ENCODE measurements at regions of chr11 and their contacts with region 1.

Region 1: GRCh38 chr11:17730608-17731462 is 3.7 kb upstream of the KCNC1 start:
- DNase-seq: peak; percentile 66
- ATAC-seq: peak; percentile 77
- H3K4me3 ChIP-seq: no peak overlapping the region
- H3K27ac ChIP-seq: no peak overlapping the region
- H3K4me1 ChIP-seq: no peaks in the 10 kb centered on the region
- H3K27me3 ChIP-seq: peaks cover 32% of the 10 kb centered on the region
- CTCF ChIP-seq: peak; percentile 96
- POLR2A ChIP-seq: peak; percentile 46; the same call in 1 of the 2 replicates
- RAD21 ChIP-seq: peak; percentile 98

Region 2: GRCh38 chr11:17598700-17599459 is 132.0 kb before region 1 on chr11:
- CTCF ChIA-PET with region 1: interaction called, 8 read pairs
- POLR2A ChIA-PET with region 1: no interaction called
- dilution Hi-C with region 1: no loop called
- in situ Hi-C with region 1: loop called (anchors 5 kb)
- intact Hi-C with region 1: loop called (anchors 1 kb)
- DNase-seq: peak; percentile 55
- ATAC-seq: peak; percentile 98
- H3K4me3 ChIP-seq: no peak overlapping the region
- H3K27ac ChIP-seq: no peak overlapping the region
- H3K4me1 ChIP-seq: no peaks in the 10 kb centered on the region
- H3K27me3 ChIP-seq: peaks cover 7% of the 10 kb centered on the region
- CTCF ChIP-seq: peak; percentile 90
- POLR2A ChIP-seq: no peak
- RAD21 ChIP-seq: peak; percentile 90

Region 3: DNA sequence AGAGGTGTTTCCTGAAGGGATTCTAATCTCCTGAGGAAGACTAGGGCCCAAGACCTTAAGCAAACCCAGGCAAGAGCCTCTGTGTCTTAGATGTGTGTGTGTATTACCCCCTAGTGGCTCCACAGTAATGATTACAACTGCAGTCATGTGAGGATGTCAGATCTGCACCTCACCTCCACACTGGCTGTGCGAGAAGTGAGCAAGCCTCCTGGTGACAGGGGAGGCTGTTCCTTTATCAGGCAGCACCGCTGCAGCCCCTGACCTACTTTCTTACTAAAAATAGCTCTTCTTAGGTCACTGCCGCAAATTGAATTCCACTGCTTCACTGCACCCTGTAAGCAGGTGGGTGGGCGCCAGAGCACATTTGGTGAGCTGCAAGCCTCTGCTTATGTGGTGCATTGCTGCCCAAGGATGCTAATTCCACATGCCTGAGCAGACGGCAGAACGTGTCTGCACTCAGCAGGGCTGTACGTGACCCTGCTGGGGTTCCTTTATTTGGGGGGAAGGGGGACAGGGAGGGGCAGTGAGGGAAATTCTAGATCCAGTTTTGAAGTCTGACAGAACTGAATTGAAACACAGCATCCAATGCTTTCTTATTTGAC is 116.1 kb after region 1 on chr11:
- CTCF ChIA-PET with region 1: interaction called, 4 read pairs
- POLR2A ChIA-PET with region 1: no interaction called
- dilution Hi-C with region 1: no loop called
- in situ Hi-C with region 1: no loop called
- intact Hi-C with region 1: loop called (anchors 1 kb)
- DNase-seq: peak; percentile 73
- ATAC-seq: peak; percentile 71
- H3K4me3 ChIP-seq: no peak overlapping the region
- H3K27ac ChIP-seq: no peak overlapping the region
- H3K4me1 ChIP-seq: peaks cover 16% of the 10 kb centered on the region
- H3K27me3 ChIP-seq: no peaks in the 10 kb centered on the region
- CTCF ChIP-seq: peak; percentile 54
- POLR2A ChIP-seq: no peak
- RAD21 ChIP-seq: peak; percentile 64

Region 4: GRCh38 chr11:17978553-17979287 is 247.9 kb after region 1 on chr11:
- CTCF ChIA-PET with region 1: interaction called, 158 read pairs
- POLR2A ChIA-PET with region 1: no interaction called
- dilution Hi-C with region 1: loop called (anchors 25 kb)
- in situ Hi-C with region 1: loop called (anchors 5 kb)
- intact Hi-C with region 1: loop called (anchors 1 kb)
- DNase-seq: peak; percentile 53
- ATAC-seq: peak; percentile 96
- H3K4me3 ChIP-seq: no peak overlapping the region
- H3K27ac ChIP-seq: no peak overlapping the region
- H3K4me1 ChIP-seq: no peaks in the 10 kb centered on the region
- H3K27me3 ChIP-seq: no peaks in the 10 kb centered on the region
- CTCF ChIP-seq: peak; percentile 78
- POLR2A ChIP-seq: no peak
- RAD21 ChIP-seq: peak; percentile 80

Region 5: DNA sequence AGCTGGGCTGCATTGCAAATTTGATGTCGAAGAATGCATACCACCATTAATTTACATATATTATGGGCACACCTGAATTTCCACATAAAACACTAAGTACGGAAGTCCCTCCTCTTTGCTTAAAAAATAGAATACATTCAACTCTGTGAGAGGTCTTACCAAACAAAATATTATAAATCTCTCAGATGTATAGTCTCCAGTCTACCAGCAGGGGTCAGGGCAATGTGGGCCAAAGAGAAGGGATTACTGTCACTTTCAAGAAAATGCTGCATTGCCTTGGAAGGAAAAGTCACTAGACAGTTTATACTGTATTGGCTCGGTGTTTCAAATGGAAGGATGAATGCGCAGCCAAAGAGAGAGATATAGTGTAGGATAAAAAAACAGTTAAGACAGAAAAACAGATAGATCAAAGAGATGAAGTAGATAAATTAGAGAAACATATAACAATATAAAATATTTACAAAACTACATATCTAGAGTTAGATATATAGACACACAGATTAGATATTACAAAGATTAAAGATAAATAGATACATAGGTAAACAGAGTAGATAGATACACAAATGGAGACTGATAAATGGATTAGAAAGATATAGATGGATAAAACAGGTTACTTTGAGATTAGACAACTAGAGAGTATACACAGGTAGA is 261.1 kb after region 1 on chr11:
- CTCF ChIA-PET with region 1: interaction called, 15 read pairs
- POLR2A ChIA-PET with region 1: no interaction called
- dilution Hi-C with region 1: loop called (anchors 25 kb)
- in situ Hi-C with region 1: no loop called
- intact Hi-C with region 1: no loop called
- DNase-seq: peak; percentile 70
- ATAC-seq: peak; percentile 99
- H3K4me3 ChIP-seq: no peak overlapping the region
- H3K27ac ChIP-seq: no peak overlapping the region
- H3K4me1 ChIP-seq: no peaks in the 10 kb centered on the region
- H3K27me3 ChIP-seq: no peaks in the 10 kb centered on the region
- CTCF ChIP-seq: peak; percentile 77
- POLR2A ChIP-seq: no peak
- RAD21 ChIP-seq: peak; percentile 66

Region 6: DNA sequence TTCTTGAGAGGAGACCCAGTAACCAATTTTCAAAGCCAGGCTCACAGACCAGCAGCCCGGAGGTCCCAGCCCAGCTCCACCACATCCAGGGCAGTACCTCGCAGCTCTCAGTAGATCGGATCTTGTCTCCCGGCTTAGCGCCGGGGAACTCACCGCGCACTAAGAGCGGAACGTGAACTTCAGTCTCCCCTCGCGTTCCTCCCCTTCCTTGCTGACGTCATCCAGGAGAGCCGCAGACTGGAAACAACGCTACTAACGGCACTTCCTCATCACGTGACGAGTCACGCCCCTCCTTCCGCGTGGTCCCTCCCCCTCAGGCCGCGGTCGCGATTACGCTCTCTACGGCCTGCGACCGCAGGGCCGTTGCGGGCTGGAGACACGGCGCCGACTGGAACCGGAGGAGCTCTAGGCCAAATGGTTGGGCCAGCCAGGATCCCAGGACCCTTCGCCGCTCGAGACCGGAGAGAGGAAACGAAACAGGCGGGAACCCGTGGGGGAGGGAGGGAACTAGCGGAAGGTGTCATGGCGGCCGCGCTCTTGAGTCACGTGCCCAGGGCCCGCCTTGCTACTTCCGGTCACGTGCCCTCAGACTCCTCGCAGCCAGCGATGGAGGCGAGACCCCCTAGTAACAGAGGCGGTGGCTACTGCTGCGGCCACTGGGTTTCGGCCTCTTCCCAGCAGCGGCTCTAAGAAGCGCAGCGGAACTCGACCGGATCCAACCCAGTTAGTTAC is 591.3 kb after region 1 on chr11 and contains the starts of genes GTF2H1 and HPS5:
- CTCF ChIA-PET with region 1: no interaction called
- POLR2A ChIA-PET with region 1: no interaction called
- dilution Hi-C with region 1: no loop called
- in situ Hi-C with region 1: no loop called
- intact Hi-C with region 1: loop called (anchors 10 kb)
- DNase-seq: peak; percentile 99
- ATAC-seq: peak; percentile 94
- H3K4me3 ChIP-seq: peak within 1 kb of the TSS; percentile 77
- H3K27ac ChIP-seq: peak within 1 kb of the TSS; percentile 98
- H3K4me1 ChIP-seq: peaks cover 4% of the 10 kb centered on the region
- H3K27me3 ChIP-seq: no peaks in the 10 kb centered on the region
- CTCF ChIP-seq: no peak
- POLR2A ChIP-seq: peak; percentile 97
- RAD21 ChIP-seq: no peak
- total RNA-seq, gene GTF2H1: 67.0 and 72.8 TPM in 2 replicates
- total RNA-seq, gene HPS5: 28.3 and 34.7 TPM in 2 replicates